GM10248 (cell line): ENCODE measurements at regions of chr14 and their contacts with region 1.

Region 1: GRCh38 chr14:74762917-74763802 is at the start of gene YLPM1:
- DNase-seq: peak; percentile 94
- CTCF ChIP-seq: peak; percentile 62

Region 2: GRCh38 chr14:74733221-74733620 is 29.9 kb before region 1 on chr14:
- CTCF ChIA-PET with region 1: interaction called, 10 read pairs
- POLR2A ChIA-PET with region 1: no interaction called
- DNase-seq: no peak
- CTCF ChIP-seq: no peak

Region 3: GRCh38 chr14:74784634-74785033 is 21.5 kb after region 1 on chr14:
- CTCF ChIA-PET with region 1: interaction called, 16 read pairs
- POLR2A ChIA-PET with region 1: no interaction called
- DNase-seq: no peak
- CTCF ChIP-seq: no peak

Region 4: DNA sequence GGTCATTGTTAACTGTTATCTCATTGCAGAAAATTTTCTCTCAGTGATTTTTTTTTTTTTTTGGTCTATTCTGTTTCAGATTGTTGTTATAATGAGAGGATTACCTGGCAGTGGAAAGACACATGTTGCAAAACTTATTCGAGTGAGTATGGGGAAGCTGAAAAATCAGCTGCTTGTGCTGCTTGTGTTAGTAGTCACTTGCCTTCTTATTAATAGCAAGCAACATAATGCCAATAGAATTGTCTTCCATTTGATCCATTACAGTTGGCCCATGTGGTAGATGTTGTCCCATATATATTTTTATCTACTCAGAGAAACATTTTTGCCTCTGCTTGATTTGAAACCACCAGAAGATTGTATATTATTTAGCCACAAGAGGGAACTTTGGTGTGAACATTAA is 53.0 kb after region 1 on chr14:
- CTCF ChIA-PET with region 1: no interaction called
- POLR2A ChIA-PET with region 1: no interaction called
- DNase-seq: no peak
- CTCF ChIP-seq: no peak